Dendritic cell treated with granulocyte-macrophage colony-stimulating factor and Interleukin-4, amounts not matched to agents 40 ng/mL and 50 ng/mL, for 4 days (primary cell): ENCODE measurements at regions of chr11 and their contacts with region 1.

Region 1: DNA sequence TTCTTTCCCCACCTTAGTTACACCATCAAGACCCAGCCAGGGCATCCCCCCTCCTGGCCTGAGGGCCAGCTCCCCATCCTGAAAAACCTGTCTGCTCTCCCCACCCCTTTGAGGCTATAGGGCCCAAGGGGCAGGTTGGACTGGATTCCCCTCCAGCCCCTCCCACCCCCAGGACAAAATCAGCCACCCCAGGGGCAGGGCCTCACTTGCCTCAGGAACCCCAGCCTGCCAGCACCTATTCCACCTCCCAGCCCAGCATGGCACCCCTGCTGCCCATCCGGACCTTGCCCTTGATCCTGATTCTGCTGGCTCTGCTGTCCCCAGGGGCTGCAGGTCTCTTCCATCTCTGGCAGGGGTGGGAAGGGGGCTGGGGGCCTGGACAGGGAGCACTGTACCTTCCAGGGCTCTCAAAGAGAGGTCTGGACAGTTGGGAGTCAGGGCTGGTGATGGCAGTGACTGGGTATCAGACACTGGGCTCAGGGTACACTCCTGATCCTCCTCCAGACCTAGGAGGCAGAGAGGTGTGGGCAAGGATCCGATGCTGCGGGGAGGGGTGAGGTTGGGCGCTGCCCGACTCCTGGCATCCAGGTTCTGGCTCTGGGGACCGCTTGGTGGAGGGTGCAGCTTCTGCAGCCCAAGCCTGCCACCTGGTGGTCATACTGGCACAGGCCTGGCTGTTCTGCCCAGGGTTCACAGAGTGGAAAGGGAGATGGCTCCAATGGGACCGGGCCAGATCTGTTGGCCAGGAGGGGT is at the start of gene UPK2:
- H3K4me3 Mint-ChIP-seq: no peak within 1 kb of the TSS
- H3K27ac Mint-ChIP-seq: no peak within 1 kb of the TSS
- H3K4me1 Mint-ChIP-seq: no peaks in the 10 kb centered on the region
- H3K27me3 Mint-ChIP-seq: peaks cover 41% of the 10 kb centered on the region

Region 2: GRCh38 chr11:118689851-118690552 is 266.3 kb before region 1 on chr11:
- intact Hi-C with region 1: loop called (anchors 1 kb)
- H3K4me3 Mint-ChIP-seq: peak overlapping the region; percentile 81
- H3K27ac Mint-ChIP-seq: peak overlapping the region; percentile 79
- H3K4me1 Mint-ChIP-seq: peaks cover 46% of the 10 kb centered on the region
- H3K27me3 Mint-ChIP-seq: peaks cover 48% of the 10 kb centered on the region